SK-N-SH (cell line): ENCODE measurements at regions of chr15 and their contacts with region 1.

Region 1: DNA sequence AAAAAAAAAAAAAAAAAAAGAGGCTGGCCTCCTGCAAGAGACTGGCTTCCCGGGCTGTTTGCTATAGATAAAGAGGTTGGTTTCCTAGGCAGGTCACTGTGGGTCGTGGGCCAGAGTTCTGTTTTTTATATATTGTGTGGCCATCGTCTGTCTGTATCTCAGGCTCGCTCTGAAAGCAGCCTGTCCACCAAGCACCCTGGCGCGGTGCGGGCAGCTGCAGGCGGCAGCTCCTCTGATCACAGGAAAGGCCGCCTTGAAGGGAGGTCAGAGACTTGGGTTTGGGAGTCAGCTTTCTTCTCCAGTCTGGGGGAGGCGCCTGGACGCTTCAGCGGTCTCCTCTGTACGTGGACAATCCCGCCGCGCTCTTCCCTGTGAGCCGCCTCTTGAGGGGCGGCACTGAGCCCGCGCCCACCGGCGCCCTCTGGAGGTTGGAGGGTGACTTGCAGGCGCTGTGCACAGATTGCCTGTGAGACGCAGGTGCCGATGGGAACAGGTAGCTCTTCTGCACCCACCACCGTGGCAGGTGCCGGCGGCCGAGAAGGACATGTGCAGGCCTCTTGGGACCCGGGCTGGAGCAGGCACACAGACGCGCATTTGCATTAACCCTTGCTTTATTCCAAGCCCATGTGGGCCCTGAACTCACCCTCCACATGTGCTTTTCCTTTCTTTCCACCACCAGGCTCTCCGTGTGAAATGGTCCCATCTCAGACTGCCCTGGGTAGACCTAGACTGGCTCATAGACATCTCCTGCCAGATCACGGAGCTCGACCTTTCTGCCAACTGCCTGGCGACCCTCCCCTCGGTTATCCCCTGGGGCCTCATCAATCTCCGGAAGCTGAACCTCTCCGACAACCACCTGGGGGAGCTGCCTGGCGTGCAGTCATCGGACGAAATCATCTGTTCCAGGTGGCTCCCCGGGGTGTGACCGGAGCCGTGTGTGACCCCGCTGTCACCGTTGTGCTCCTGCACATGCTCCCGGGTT is 89.3 kb downstream of the LRRK1 start:
- DNase-seq: peak; percentile 89
- H3K4me3 ChIP-seq: peak overlapping the region; percentile 43 to 59
- H3K27ac ChIP-seq: no peak overlapping the region; a peak in 1 of 4 replicates
- H3K4me1 ChIP-seq: peaks cover 0 to 4% of the 10 kb centered on the region in 2 experiments; a peak in 1 of 4 replicates
- H3K27me3 ChIP-seq: no peaks in the 10 kb centered on the region
- CTCF ChIP-seq: peak; percentile 92
- EP300 ChIP-seq: no peak
- RAD21 ChIP-seq: peak; percentile 60

Region 2: GRCh38 chr15:100349696-100350433 is 658.6 kb before region 1 on chr15:
- CTCF ChIA-PET with region 1: interaction called, 22 read pairs
- POLR2A ChIA-PET with region 1: no interaction called
- DNase-seq: peak; percentile 92
- H3K4me3 ChIP-seq: peak overlapping the region; percentile 57 to 58; a peak in 3 of 4 replicates
- H3K27ac ChIP-seq: peak overlapping the region in 1 of 2 experiments; percentile 79; a peak in 2 of 4 replicates
- H3K4me1 ChIP-seq: peaks cover 0 to 3% of the 10 kb centered on the region in 2 experiments; a peak in 1 of 4 replicates
- H3K27me3 ChIP-seq: no peaks in the 10 kb centered on the region
- CTCF ChIP-seq: peak; percentile 46
- EP300 ChIP-seq: no peak
- RAD21 ChIP-seq: peak; percentile 66

Region 3: DNA sequence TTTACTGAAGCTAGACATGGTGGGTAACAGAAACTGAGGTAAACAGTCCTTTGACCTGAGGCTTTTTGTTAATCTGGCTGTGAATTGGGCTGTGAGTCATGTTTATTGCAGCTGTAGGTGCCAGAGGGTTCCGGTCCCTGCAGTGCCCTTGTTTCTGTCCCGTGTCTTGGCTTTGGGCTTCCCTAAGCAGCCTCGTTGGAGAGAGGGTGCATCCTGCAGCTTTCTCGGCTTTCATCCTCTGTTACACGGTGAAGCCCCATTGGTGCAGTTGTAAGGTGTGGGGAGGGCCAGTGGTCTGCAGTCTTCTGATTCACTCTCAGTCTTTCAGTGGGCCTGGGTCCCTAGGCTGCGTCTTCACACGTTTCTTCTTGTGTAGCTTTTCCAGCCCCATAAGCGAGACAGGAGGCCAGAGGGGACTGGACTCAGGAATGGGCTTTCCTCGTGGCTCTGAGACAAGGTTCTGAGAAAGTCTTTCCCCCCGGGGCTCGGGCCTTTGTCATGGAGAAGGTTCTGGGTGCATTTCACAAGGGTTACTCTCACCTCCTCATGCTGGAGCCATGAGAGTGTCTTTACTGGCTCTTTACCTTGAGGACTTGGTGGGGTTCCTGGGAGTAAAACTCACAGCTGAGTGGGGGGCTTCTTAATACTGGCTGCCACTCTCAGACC is 372.9 kb before region 1 on chr15:
- CTCF ChIA-PET with region 1: interaction called, 102 read pairs
- POLR2A ChIA-PET with region 1: no interaction called
- DNase-seq: no peak
- H3K4me3 ChIP-seq: no peak overlapping the region
- H3K27ac ChIP-seq: no peak overlapping the region; a peak in 1 of 4 replicates
- H3K4me1 ChIP-seq: peaks cover 0 to 10% of the 10 kb centered on the region in 2 experiments; a peak in 1 of 4 replicates
- H3K27me3 ChIP-seq: no peaks in the 10 kb centered on the region
- CTCF ChIP-seq: no peak
- EP300 ChIP-seq: no peak
- RAD21 ChIP-seq: no peak

Region 4: GRCh38 chr15:100759698-100760356 is 248.6 kb before region 1 on chr15:
- CTCF ChIA-PET with region 1: interaction called, 22 read pairs
- POLR2A ChIA-PET with region 1: no interaction called
- DNase-seq: peak; percentile 62
- H3K4me3 ChIP-seq: peak overlapping the region; percentile 21 to 36; a peak in 2 of 4 replicates
- H3K27ac ChIP-seq: peak overlapping the region; percentile 75 to 95
- H3K4me1 ChIP-seq: peaks cover 5 to 47% of the 10 kb centered on the region in 2 experiments; a peak in 3 of 4 replicates
- H3K27me3 ChIP-seq: no peaks in the 10 kb centered on the region
- CTCF ChIP-seq: no peak
- EP300 ChIP-seq: peak; percentile 71 to 76
- RAD21 ChIP-seq: no peak

Region 5: GRCh38 chr15:100902436-100903167 is 105.8 kb before region 1 on chr15:
- CTCF ChIA-PET with region 1: interaction called, 13 read pairs
- POLR2A ChIA-PET with region 1: no interaction called
- DNase-seq: peak; percentile 87
- H3K4me3 ChIP-seq: peak overlapping the region; percentile 26 to 33; a peak in 3 of 4 replicates
- H3K27ac ChIP-seq: peak overlapping the region; percentile 60 to 98
- H3K4me1 ChIP-seq: peaks cover 12 to 44% of the 10 kb centered on the region in 2 experiments
- H3K27me3 ChIP-seq: no peaks in the 10 kb centered on the region
- CTCF ChIP-seq: no peak
- EP300 ChIP-seq: peak in 1 of 2 experiments; percentile 75; a peak in 2 of 4 replicates
- RAD21 ChIP-seq: peak; percentile 36

Region 6: DNA sequence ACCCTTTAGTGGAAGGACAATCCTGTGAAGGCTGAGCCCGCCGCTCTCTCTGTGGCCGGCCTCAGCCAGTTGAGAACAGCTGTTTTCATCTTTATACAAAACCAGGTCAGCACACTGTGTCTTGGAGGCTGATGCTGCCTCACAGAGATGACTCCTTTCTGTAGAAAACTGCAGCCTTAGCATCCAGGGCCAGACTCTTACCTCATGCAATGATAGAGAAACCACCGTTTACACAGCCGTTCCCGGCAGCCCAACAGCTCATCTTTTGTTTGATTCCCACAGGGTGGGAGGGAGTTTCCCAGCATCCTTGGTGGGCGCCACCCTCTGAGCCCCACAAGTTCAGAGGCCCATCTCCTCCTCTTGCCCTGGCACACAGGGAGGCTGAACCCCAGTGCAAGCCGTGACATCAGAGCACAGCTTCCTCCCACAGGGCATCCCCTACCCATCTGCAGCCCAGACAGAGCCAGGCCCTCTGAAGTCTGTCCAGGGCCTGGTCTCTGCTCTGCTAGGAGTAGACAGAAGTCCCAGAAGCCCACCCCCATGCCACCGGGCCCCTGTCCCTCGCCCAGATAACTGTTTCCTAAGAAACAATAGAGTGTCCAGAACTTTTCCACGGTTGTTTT is 15.7 kb after region 1 on chr15:
- CTCF ChIA-PET with region 1: interaction called, 17 read pairs
- POLR2A ChIA-PET with region 1: interaction called, 3 read pairs
- DNase-seq: no peak
- H3K4me3 ChIP-seq: no peak overlapping the region
- H3K27ac ChIP-seq: no peak overlapping the region
- H3K4me1 ChIP-seq: no peaks in the 10 kb centered on the region
- H3K27me3 ChIP-seq: no peaks in the 10 kb centered on the region
- CTCF ChIP-seq: no peak
- EP300 ChIP-seq: no peak
- RAD21 ChIP-seq: no peak

Region 7: GRCh38 chr15:101258238-101259144 is 250.0 kb after region 1 on chr15:
- CTCF ChIA-PET with region 1: interaction called, 44 read pairs
- POLR2A ChIA-PET with region 1: no interaction called
- DNase-seq: peak; percentile 66
- H3K4me3 ChIP-seq: peak overlapping the region in 1 of 2 experiments; percentile 34; a peak in 1 of 4 replicates
- H3K27ac ChIP-seq: no peak overlapping the region
- H3K4me1 ChIP-seq: peaks cover 0 to 8% of the 10 kb centered on the region in 2 experiments; a peak in 1 of 4 replicates
- H3K27me3 ChIP-seq: no peaks in the 10 kb centered on the region
- CTCF ChIP-seq: peak; percentile 98
- EP300 ChIP-seq: 0 out of 4 replicates have a peak, but pooled peaks of 1 of the 2 experiments have one; percentile 14
- RAD21 ChIP-seq: peak; percentile 99